Ovary (tissue), 10 donors: ENCODE measurements at regions of chr16 and their contacts with region 1.

Region 1: GRCh38 chr16:27598931-27599565 is 49.1 kb downstream of the KATNIP start:
- DNase-seq: peak in 1 of 5 donors; percentile 24
- H3K4me3 ChIP-seq: no peak overlapping the region
- H3K27ac ChIP-seq: no peak overlapping the region
- H3K4me1 ChIP-seq: peaks cover 3% of the 10 kb centered on the region
- H3K27me3 ChIP-seq: no peaks in the 10 kb centered on the region
- CTCF ChIP-seq: no peak
- EP300 ChIP-seq: no peak
- POLR2A ChIP-seq: no peak

Region 2: GRCh38 chr16:27625050-27625697 is 26.1 kb after region 1 on chr16:
- intact Hi-C with region 1: no loop called
- DNase-seq: no peak
- H3K4me3 ChIP-seq: no peak overlapping the region
- H3K27ac ChIP-seq: no peak overlapping the region
- H3K4me1 ChIP-seq: peaks cover 16% of the 10 kb centered on the region
- H3K27me3 ChIP-seq: no peaks in the 10 kb centered on the region
- CTCF ChIP-seq: no peak
- EP300 ChIP-seq: no peak
- POLR2A ChIP-seq: no peak

Region 3: DNA sequence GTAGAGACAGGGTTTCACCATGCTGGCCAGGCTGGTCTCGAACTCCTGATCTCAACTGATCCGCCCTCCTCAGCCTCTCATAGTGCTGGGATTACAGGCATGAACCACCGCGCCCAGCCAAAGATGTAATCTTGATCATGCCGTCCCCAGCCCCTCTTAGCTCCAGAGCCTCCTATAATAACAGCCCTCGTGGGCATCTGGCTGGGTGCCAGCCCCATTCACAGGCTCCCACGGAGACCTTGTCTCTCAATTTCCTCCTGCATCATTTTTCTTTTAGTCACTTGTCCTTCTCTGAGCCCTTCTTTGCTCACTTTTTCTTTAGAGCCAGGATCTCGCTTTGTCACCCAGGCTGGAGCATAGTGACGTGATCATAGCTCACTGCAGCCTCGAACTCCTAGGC is 45.2 kb after region 1 on chr16:
- intact Hi-C with region 1: loop called in 1 of 4 experiments (anchors 1 kb)
- DNase-seq: no peak
- H3K4me3 ChIP-seq: no peak overlapping the region
- H3K27ac ChIP-seq: no peak overlapping the region
- H3K4me1 ChIP-seq: no peaks in the 10 kb centered on the region
- H3K27me3 ChIP-seq: no peaks in the 10 kb centered on the region
- CTCF ChIP-seq: no peak
- EP300 ChIP-seq: no peak
- POLR2A ChIP-seq: no peak